Activated naive CD4-positive, alpha-beta T cell treated with anti-CD3 and anti-CD28 coated beads for 36 hours (primary cell): ENCODE measurements at regions of chr2 and their contacts with region 1.

Region 1: DNA sequence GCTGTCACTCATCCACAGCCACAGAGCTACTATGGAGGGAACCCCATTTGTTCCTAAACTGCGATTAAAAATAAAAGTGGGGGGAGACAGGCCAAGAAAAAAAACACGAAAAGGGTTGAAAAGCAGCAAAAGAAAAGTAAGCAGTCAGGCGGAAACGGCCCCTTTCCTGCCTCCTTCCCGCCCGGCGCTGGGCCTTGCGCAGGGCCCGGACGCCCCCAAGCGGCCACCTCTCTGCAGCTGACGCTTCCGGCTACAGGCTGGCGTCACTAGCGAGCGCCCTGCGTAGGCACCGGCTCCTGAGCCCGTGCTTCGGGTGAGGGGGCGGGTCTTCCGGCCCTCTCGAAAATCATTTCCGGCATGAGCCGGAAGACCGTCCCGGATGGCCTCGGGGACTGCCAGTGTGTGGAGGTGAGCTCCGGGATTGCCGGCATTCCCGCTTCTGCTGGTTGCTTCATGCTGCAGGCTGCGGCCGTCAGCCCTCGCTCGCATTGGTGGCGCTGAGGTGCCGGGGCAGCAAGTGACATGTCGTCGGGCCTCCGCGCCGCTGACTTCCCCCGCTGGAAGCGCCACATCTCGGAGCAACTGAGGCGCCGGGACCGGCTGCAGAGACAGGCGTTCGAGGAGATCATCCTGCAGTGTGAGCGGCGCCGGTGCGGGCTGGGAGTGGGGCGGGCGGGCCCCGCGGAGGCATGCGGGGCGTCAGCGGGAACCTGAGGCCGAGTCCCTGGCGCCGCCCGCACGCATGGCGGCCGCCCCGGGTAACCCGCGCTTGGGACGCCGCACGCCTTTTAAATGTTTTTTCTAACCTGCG is at the start of gene ATG16L1:
- DNase-seq: peak; percentile 97
- H3K4me3 Mint-ChIP-seq: peak within 1 kb of the TSS; percentile 85
- H3K27ac Mint-ChIP-seq: peak within 1 kb of the TSS; percentile 97
- H3K4me1 Mint-ChIP-seq: peaks cover 70% of the 10 kb centered on the region
- H3K27me3 Mint-ChIP-seq: no peaks in the 10 kb centered on the region
- total RNA-seq, gene ATG16L1: 21.2 to 24.2 TPM

Region 2: DNA sequence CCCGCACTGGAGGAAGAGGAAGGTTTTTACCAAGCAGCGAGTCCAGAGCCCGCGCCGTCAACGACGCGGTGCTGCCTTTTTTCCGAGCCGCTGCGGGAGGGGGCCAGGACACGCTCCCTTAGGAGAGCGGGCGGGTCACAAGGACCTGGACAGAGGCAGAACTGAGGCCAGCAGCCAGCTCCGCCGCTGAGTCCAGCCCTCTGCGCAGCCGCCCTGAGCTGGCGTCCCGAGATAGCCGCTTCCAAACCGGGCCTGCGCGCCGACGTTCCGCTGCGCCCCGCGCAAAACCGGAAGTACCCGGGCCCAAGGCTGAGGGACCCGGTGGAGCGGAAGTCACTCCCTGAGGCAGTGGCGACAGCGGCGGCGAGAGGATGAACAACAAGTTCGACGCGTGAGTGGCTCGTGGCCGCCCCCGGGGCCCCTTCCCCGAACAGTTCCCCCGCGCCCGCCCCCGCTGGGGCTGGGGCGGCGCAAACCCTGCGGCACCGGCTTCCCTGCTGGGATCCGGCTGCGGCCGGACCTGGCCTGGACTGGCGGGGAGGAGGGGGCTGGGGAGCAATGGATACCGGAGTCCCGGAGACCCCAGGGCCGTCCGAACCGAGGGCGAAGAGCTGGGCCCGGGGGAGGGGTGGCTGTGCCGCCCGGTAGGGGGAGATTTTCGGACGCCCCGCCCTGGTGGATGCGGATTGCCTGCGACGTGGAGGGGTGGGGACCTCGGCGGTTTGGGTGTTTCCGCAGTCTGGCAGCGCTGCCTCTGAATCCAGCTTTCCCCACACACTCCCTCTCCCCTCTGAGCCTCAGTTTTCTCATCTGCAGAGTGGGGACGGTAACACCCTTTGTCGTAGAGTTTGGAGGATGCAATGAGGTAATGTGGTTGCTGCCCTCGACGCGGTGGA is 700.9 kb before region 1 on chr2 and contains the starts of genes EIF4E2 and TIGD1:
- CTCF ChIA-PET with region 1: no interaction called
- intact Hi-C with region 1: loop called (anchors 1 kb)
- DNase-seq: peak; percentile 95
- H3K4me3 Mint-ChIP-seq: peak within 1 kb of the TSS; percentile 99
- H3K27ac Mint-ChIP-seq: peak within 1 kb of the TSS; percentile 98
- H3K4me1 Mint-ChIP-seq: peaks cover 66% of the 10 kb centered on the region
- H3K27me3 Mint-ChIP-seq: no peaks in the 10 kb centered on the region
- total RNA-seq, gene EIF4E2: 46.6 to 54.1 TPM
- total RNA-seq, gene TIGD1: 7.7 to 8.3 TPM

Region 3: GRCh38 chr2:232697100-232697865 is 554.2 kb before region 1 on chr2 and contains the start of gene GIGYF2:
- CTCF ChIA-PET with region 1: no interaction called
- intact Hi-C with region 1: loop called (anchors 1 kb)
- DNase-seq: peak; percentile 97
- H3K4me3 Mint-ChIP-seq: peak within 1 kb of the TSS; percentile 87
- H3K27ac Mint-ChIP-seq: peak within 1 kb of the TSS; percentile 70
- H3K4me1 Mint-ChIP-seq: peaks cover 36% of the 10 kb centered on the region
- H3K27me3 Mint-ChIP-seq: no peaks in the 10 kb centered on the region
- total RNA-seq, gene GIGYF2: 49.7 to 52.8 TPM

Region 4: DNA sequence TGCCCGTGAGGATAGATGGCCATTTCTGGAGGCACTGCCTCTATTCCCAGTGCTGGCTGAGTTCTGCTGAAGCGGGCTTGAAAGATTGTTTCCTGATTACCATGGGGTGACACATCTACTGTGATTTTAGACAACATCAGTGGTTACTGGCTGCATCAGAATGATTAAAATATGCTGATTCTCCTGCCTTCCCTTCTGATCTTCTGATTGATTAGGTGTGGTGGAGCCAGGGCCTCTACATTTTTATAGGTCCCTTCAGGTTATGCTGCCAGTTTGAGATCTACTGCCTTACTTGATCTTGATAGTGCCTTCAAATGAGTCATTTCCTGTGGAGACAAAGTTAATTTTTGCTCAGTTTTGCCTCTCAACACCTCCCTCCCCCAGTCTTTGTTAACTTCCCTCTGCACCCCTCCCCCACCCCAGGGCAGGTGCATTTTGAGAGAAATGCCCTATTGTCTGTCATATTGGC is 413.1 kb before region 1 on chr2:
- CTCF ChIA-PET with region 1: interaction called, 3 read pairs
- intact Hi-C with region 1: loop called (anchors 5 kb)
- DNase-seq: peak; percentile 83
- H3K4me3 Mint-ChIP-seq: peak overlapping the region; percentile 28
- H3K27ac Mint-ChIP-seq: peak overlapping the region; percentile 84
- H3K4me1 Mint-ChIP-seq: peaks cover 25% of the 10 kb centered on the region
- H3K27me3 Mint-ChIP-seq: no peaks in the 10 kb centered on the region

Region 5: GRCh38 chr2:233061591-233062450 is 189.7 kb before region 1 on chr2:
- CTCF ChIA-PET with region 1: interaction called, 19 read pairs
- intact Hi-C with region 1: loop called (anchors 1 kb)
- DNase-seq: peak; percentile 76
- H3K4me3 Mint-ChIP-seq: peak overlapping the region; percentile 98
- H3K27ac Mint-ChIP-seq: peak overlapping the region; percentile 98
- H3K4me1 Mint-ChIP-seq: peaks cover 40% of the 10 kb centered on the region
- H3K27me3 Mint-ChIP-seq: no peaks in the 10 kb centered on the region

Region 6: GRCh38 chr2:233234264-233234663 is 17.2 kb before region 1 on chr2:
- CTCF ChIA-PET with region 1: interaction called, 7 read pairs
- intact Hi-C with region 1: loop called (anchors 2 kb)
- DNase-seq: peak; percentile 32
- H3K4me3 Mint-ChIP-seq: no peak overlapping the region
- H3K27ac Mint-ChIP-seq: no peak overlapping the region
- H3K4me1 Mint-ChIP-seq: peaks cover 33% of the 10 kb centered on the region
- H3K27me3 Mint-ChIP-seq: no peaks in the 10 kb centered on the region

Region 7: GRCh38 chr2:233261819-233262555 is 10.5 kb after region 1 on chr2:
- CTCF ChIA-PET with region 1: no interaction called
- intact Hi-C with region 1: no loop called
- DNase-seq: no peak
- H3K4me3 Mint-ChIP-seq: no peak overlapping the region
- H3K27ac Mint-ChIP-seq: peak overlapping the region; percentile 11
- H3K4me1 Mint-ChIP-seq: peaks cover 32% of the 10 kb centered on the region
- H3K27me3 Mint-ChIP-seq: no peaks in the 10 kb centered on the region